OCI-LY7 (cell line): ENCODE measurements at regions of chr5 and their contacts with region 1.

Region 1: GRCh38 chr5:62403434-62404250 is at the start of gene DIMT1:
- DNase-seq: peak; percentile 97
- H3K4me3 ChIP-seq: peak within 1 kb of the TSS; percentile 98
- H3K27ac ChIP-seq: peak within 1 kb of the TSS; percentile 80
- H3K4me1 ChIP-seq: peaks cover 17% of the 10 kb centered on the region
- CTCF ChIP-seq: no peak
- total RNA-seq, gene DIMT1: 19.6 and 46.4 TPM in 2 replicates

Region 2: DNA sequence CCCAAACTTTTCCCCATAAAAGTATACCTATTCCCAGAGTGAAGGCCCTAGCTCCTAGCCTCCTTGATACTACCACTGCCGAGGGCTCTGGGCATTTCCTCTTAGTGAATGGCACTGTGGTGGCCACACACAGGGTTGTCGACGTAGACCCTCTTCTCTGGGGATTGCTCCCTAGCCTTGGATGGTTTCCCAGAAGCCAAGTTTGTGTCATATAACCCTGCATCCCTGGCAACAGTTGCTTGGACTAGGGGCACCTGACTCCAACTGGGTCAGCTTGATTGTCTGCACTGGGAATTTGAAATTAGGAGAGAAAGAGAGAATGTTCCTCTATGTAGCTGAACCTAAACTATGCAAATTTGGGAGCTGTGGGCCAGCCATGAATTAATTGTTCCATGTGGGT is 130.0 kb before region 1 on chr5:
- CTCF ChIA-PET with region 1: no interaction called
- POLR2A ChIA-PET with region 1: no interaction called
- intact Hi-C with region 1: no loop called
- DNase-seq: no peak
- H3K4me3 ChIP-seq: no peak overlapping the region
- H3K27ac ChIP-seq: no peak overlapping the region
- H3K4me1 ChIP-seq: no peaks in the 10 kb centered on the region
- CTCF ChIP-seq: no peak

Region 3: GRCh38 chr5:62289813-62290212 is 113.8 kb before region 1 on chr5:
- CTCF ChIA-PET with region 1: no interaction called
- POLR2A ChIA-PET with region 1: no interaction called
- intact Hi-C with region 1: no loop called
- DNase-seq: no peak
- H3K4me3 ChIP-seq: no peak overlapping the region
- H3K27ac ChIP-seq: no peak overlapping the region
- H3K4me1 ChIP-seq: no peaks in the 10 kb centered on the region
- CTCF ChIP-seq: no peak

Region 4: GRCh38 chr5:62305715-62306322 is 97.8 kb before region 1 on chr5 and contains the start of gene KIF2A:
- CTCF ChIA-PET with region 1: interaction called, 3 read pairs
- POLR2A ChIA-PET with region 1: interaction called, 11 read pairs
- intact Hi-C with region 1: loop called (anchors 2 kb)
- DNase-seq: peak; percentile 97
- H3K4me3 ChIP-seq: peak within 1 kb of the TSS; percentile 97
- H3K27ac ChIP-seq: peak within 1 kb of the TSS; percentile 88
- H3K4me1 ChIP-seq: peaks cover 35% of the 10 kb centered on the region
- CTCF ChIP-seq: no peak
- total RNA-seq, gene KIF2A: 50.3 and 56.9 TPM in 2 replicates

Region 5: DNA sequence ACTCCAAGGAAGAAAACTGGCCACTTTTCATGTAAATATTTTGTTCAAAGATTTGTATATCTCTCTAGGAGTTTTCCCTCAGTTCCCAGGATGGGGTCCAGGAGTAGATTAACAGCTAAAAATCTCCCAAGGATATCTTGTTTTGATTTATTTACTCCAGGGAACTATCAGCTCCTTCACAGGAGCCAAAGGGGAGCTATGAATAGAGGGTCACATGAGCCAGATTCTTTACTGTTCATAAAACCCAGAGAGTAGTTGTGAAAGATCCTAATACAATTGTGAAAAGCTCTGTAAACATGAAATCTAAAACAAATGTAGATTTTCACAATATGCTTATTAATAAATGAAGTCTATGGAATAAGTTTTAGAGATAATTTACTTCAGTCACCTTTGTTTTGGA is 16.8 kb before region 1 on chr5:
- CTCF ChIA-PET with region 1: no interaction called
- POLR2A ChIA-PET with region 1: interaction called, 31 read pairs
- intact Hi-C with region 1: no loop called
- DNase-seq: no peak
- H3K4me3 ChIP-seq: no peak overlapping the region
- H3K27ac ChIP-seq: no peak overlapping the region
- H3K4me1 ChIP-seq: no peaks in the 10 kb centered on the region
- CTCF ChIP-seq: no peak